ENCODE measurements at regions of chr4 and their contacts with region 1.

Region 1: GRCh38 chr4:53490965-53491622 is 100.2 kb downstream of the LNX1 start:
- DNase-seq: no peak
- ATAC-seq: peak; percentile 89
- H3K4me3 ChIP-seq: no peak overlapping the region
- H3K27ac ChIP-seq: no peak overlapping the region
- H3K4me1 ChIP-seq: no peaks in the 10 kb centered on the region
- H3K27me3 ChIP-seq: peaks cover 0 to 3% of the 10 kb centered on the region in 2 experiments; a peak in 1 of 4 replicates
- CTCF ChIP-seq: peak; percentile 53 to 67 (median 62)
- EP300 ChIP-seq: no peak
- POLR2A ChIP-seq: no peak
- RAD21 ChIP-seq: peak; percentile 64

Region 2: DNA sequence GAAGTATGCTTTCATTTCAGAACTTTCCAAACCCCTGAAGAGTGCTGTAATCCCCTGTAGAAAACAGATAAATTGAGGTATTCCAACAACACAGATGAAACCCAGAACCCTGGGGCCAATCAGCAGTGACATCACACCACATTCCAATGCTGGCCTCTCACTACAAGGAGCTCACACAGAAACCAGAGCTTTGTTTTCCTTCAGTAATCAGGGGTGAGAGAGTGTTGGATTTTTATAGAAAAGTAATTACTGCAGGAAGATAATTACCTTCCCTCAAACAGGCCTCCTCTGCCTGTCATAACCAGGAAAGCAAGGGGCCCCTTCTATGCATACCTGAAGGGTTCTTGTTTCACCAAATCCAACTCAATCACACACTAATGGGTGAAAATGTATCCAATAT is 371.4 kb before region 1 on chr4:
- CTCF ChIA-PET with region 1: no interaction called
- POLR2A ChIA-PET with region 1: no interaction called
- RAD21 ChIA-PET with region 1: no interaction called
- SMC1A ChIA-PET with region 1: no interaction called
- in situ Hi-C with region 1: no loop called
- intact Hi-C with region 1: no loop called
- DNase-seq: no peak
- ATAC-seq: no peak
- H3K4me3 ChIP-seq: no peak overlapping the region
- H3K27ac ChIP-seq: no peak overlapping the region
- H3K4me1 ChIP-seq: no peaks in the 10 kb centered on the region
- H3K27me3 ChIP-seq: no peaks in the 10 kb centered on the region
- CTCF ChIP-seq: no peak
- EP300 ChIP-seq: no peak
- POLR2A ChIP-seq: no peak
- RAD21 ChIP-seq: no peak

Region 3: DNA sequence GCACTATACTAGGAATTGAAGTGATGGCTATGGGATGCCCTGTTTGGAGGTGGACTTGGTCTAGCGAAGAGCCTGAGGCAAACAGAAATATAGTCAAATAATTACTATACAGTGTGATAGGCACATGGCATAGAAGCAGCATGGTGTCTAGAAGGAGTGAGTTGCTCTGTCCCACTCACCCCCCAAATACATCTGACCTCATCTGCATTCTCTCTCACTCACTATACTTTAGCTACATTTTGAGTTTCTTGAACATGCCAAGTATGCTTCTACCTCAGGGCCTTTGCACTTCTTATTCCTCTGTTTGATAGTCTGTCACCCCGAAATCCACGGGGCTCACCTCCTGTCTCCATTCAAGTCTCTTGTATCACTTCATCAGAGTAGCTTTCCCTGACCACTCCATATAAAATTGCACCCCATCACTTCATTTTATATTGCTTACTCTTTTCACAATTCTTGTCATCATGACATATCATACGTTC is 116.3 kb before region 1 on chr4:
- CTCF ChIA-PET with region 1: no interaction called
- POLR2A ChIA-PET with region 1: no interaction called
- RAD21 ChIA-PET with region 1: no interaction called
- SMC1A ChIA-PET with region 1: no interaction called
- in situ Hi-C with region 1: no loop called
- intact Hi-C with region 1: no loop called
- DNase-seq: no peak
- ATAC-seq: no peak
- H3K4me3 ChIP-seq: no peak overlapping the region
- H3K27ac ChIP-seq: no peak overlapping the region
- H3K4me1 ChIP-seq: no peaks in the 10 kb centered on the region
- H3K27me3 ChIP-seq: no peaks in the 10 kb centered on the region
- CTCF ChIP-seq: no peak
- EP300 ChIP-seq: no peak
- POLR2A ChIP-seq: no peak
- RAD21 ChIP-seq: no peak

Region 4: GRCh38 chr4:53455777-53456176 is 35.3 kb before region 1 on chr4:
- CTCF ChIA-PET with region 1: no interaction called
- POLR2A ChIA-PET with region 1: no interaction called
- RAD21 ChIA-PET with region 1: no interaction called
- SMC1A ChIA-PET with region 1: no interaction called
- in situ Hi-C with region 1: no loop called
- intact Hi-C with region 1: no loop called
- DNase-seq: no peak
- ATAC-seq: no peak
- H3K4me3 ChIP-seq: no peak overlapping the region
- H3K27ac ChIP-seq: no peak overlapping the region
- H3K4me1 ChIP-seq: no peaks in the 10 kb centered on the region
- H3K27me3 ChIP-seq: no peaks in the 10 kb centered on the region
- CTCF ChIP-seq: no peak
- EP300 ChIP-seq: no peak
- POLR2A ChIP-seq: no peak
- RAD21 ChIP-seq: no peak

Region 5: DNA sequence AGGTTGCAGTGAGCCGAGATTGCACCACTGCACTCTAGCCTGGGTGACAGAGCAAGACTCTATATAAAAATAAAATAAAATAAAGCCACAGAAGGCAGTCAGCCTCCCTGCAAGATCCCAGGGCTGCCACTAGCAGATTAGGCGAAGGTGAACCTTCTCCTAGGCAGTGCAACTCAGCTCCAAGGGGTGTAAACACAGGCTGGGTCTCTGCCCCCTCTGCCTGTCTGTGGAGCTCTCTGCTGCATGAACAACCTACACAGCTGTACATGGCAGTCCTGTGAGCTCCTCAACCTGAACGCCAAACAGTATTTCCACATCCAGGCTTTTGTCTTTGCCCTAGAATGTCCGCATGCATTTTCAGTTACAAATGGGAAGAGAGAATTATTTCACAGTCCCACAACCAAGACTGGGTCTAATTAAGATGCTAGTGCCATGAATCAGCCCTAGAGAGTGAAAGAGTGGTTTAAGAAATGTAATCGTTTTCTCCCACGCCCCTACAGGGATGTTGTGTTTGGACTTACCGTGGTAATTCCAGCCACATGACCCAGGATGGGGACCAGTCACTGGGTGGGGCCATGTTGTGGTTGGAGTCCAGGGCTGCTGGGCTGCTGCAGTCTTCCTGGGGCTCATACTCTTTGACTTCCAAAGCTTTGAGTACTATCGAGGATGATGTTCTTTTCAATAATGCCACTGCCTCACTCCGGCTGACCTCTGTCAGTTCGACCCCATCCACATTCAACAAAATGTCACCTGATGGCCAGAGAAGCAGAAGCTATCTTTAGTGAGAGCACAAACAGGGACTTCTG is 14.7 kb before region 1 on chr4:
- CTCF ChIA-PET with region 1: interaction called, 25 read pairs
- POLR2A ChIA-PET with region 1: interaction called, 5 read pairs
- RAD21 ChIA-PET with region 1: no interaction called
- SMC1A ChIA-PET with region 1: interaction called, 4 read pairs
- in situ Hi-C with region 1: no loop called
- intact Hi-C with region 1: no loop called
- DNase-seq: no peak
- ATAC-seq: no peak
- H3K4me3 ChIP-seq: no peak overlapping the region
- H3K27ac ChIP-seq: no peak overlapping the region
- H3K4me1 ChIP-seq: no peaks in the 10 kb centered on the region
- H3K27me3 ChIP-seq: no peaks in the 10 kb centered on the region; a peak in 1 of 4 replicates
- CTCF ChIP-seq: no peak
- EP300 ChIP-seq: no peak
- POLR2A ChIP-seq: no peak
- RAD21 ChIP-seq: no peak

Region 6: GRCh38 chr4:53592686-53593501 is 101.8 kb after region 1 on chr4:
- CTCF ChIA-PET with region 1: no interaction called
- POLR2A ChIA-PET with region 1: no interaction called
- RAD21 ChIA-PET with region 1: no interaction called
- SMC1A ChIA-PET with region 1: no interaction called
- in situ Hi-C with region 1: no loop called
- intact Hi-C with region 1: loop called (anchors 10 kb)
- DNase-seq: no peak
- ATAC-seq: peak; percentile 74
- H3K4me3 ChIP-seq: no peak overlapping the region
- H3K27ac ChIP-seq: no peak overlapping the region
- H3K4me1 ChIP-seq: peaks cover 3% of the 10 kb centered on the region; the same call in 1 of the 2 replicates
- H3K27me3 ChIP-seq: no peaks in the 10 kb centered on the region
- CTCF ChIP-seq: no peak
- EP300 ChIP-seq: no peak
- POLR2A ChIP-seq: no peak
- RAD21 ChIP-seq: no peak

Region 7: DNA sequence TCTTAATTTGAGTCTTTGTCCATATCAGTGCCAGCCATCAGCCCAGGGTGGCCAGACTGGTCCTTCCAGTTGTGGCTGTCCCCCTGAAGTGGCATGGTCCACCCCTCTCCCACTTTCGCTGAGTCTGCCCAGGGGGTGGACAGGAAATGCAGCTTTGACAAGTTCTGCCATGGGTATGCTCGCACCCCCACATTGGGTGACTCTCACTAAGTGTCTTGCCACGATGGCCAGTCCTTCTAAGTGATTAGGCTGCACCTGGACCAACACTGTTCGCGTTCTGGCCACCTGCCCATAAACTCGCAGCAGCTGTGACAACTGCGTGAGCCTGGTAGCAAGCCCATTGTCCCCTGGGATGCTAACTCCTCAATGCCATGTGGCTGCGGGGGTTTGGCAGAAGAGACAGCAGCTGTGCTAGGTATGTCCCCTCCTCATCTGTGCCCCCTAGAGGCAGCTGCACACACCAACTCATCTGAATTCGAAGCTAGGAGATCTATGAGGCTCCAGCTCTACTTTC is 110.2 kb after region 1 on chr4:
- CTCF ChIA-PET with region 1: interaction called, 17 read pairs
- POLR2A ChIA-PET with region 1: no interaction called
- RAD21 ChIA-PET with region 1: no interaction called
- SMC1A ChIA-PET with region 1: interaction called, 5 read pairs
- in situ Hi-C with region 1: no loop called
- intact Hi-C with region 1: loop called (anchors 10 kb)
- DNase-seq: no peak
- ATAC-seq: peak; percentile 89
- H3K4me3 ChIP-seq: no peak overlapping the region
- H3K27ac ChIP-seq: no peak overlapping the region
- H3K4me1 ChIP-seq: peaks cover 16% of the 10 kb centered on the region
- H3K27me3 ChIP-seq: no peaks in the 10 kb centered on the region
- CTCF ChIP-seq: peak; percentile 35 to 49 (median 45); a peak in 5 of 6 replicates
- EP300 ChIP-seq: no peak
- POLR2A ChIP-seq: no peak
- RAD21 ChIP-seq: peak; percentile 44

Region 8: GRCh38 chr4:54217642-54218495 is 726.8 kb after region 1 on chr4:
- CTCF ChIA-PET with region 1: no interaction called
- POLR2A ChIA-PET with region 1: no interaction called
- RAD21 ChIA-PET with region 1: no interaction called
- SMC1A ChIA-PET with region 1: interaction called, 3 read pairs
- in situ Hi-C with region 1: loop called (anchors 10 kb)
- intact Hi-C with region 1: no loop called
- DNase-seq: no peak
- ATAC-seq: peak; percentile 97
- H3K4me3 ChIP-seq: no peak overlapping the region
- H3K27ac ChIP-seq: no peak overlapping the region
- H3K4me1 ChIP-seq: no peaks in the 10 kb centered on the region
- H3K27me3 ChIP-seq: no peaks in the 10 kb centered on the region; a peak in 2 of 4 replicates
- CTCF ChIP-seq: peak; percentile 71 to 90 (median 76); a peak in 5 of 6 replicates
- EP300 ChIP-seq: no peak
- POLR2A ChIP-seq: no peak
- RAD21 ChIP-seq: peak; percentile 92